MCF 10A (cell line): ENCODE measurements at regions of chr18 and their contacts with region 1.

Region 1: GRCh38 chr18:57941841-57942489 is 102.1 kb upstream of the NEDD4L start:
- DNase-seq: peak; percentile 91
- H3K4me3 Mint-ChIP-seq: no peak overlapping the region
- H3K27ac Mint-ChIP-seq: no peak overlapping the region
- H3K4me1 Mint-ChIP-seq: peaks cover 23% of the 10 kb centered on the region
- H3K27me3 Mint-ChIP-seq: no peaks in the 10 kb centered on the region
- CTCF ChIP-seq: no peak

Region 2: GRCh38 chr18:57898506-57899124 is 43.4 kb before region 1 on chr18:
- CTCF ChIA-PET with region 1: no interaction called
- POLR2A ChIA-PET with region 1: interaction called, 19 read pairs
- intact Hi-C with region 1: no loop called
- DNase-seq: peak; percentile 73
- H3K4me3 Mint-ChIP-seq: no peak overlapping the region
- H3K27ac Mint-ChIP-seq: no peak overlapping the region
- H3K4me1 Mint-ChIP-seq: peaks cover 27% of the 10 kb centered on the region
- H3K27me3 Mint-ChIP-seq: no peaks in the 10 kb centered on the region
- CTCF ChIP-seq: no peak

Region 3: GRCh38 chr18:57910817-57911216 is 31.1 kb before region 1 on chr18:
- CTCF ChIA-PET with region 1: interaction called, 4 read pairs
- POLR2A ChIA-PET with region 1: interaction called, 11 read pairs
- intact Hi-C with region 1: no loop called
- DNase-seq: no peak
- H3K4me3 Mint-ChIP-seq: no peak overlapping the region
- H3K27ac Mint-ChIP-seq: peak overlapping the region; percentile 97
- H3K4me1 Mint-ChIP-seq: peaks cover 39% of the 10 kb centered on the region
- H3K27me3 Mint-ChIP-seq: no peaks in the 10 kb centered on the region
- CTCF ChIP-seq: peak; percentile 39

Region 4: DNA sequence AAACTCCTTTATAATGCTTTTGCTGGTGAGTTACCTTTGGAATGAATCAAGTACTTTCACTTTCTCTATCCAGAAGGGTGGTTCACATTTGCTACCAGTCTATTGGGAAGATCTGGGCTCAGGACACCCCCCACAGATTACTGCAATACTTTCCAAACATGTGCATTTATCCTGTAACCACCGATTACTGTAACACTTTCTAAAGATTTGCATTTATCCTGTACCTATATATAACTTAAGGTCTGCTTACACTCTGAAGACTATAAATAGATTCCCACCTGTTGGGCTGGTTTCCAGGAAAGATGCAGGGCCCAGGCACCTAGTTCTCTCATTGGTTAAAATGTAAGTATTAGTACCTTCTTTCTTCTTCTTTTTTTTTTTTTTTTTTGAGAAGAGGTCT is 10.9 kb before region 1 on chr18:
- CTCF ChIA-PET with region 1: interaction called, 3 read pairs
- POLR2A ChIA-PET with region 1: interaction called, 13 read pairs
- intact Hi-C with region 1: no loop called
- DNase-seq: peak; percentile 36
- H3K4me3 Mint-ChIP-seq: no peak overlapping the region
- H3K27ac Mint-ChIP-seq: no peak overlapping the region
- H3K4me1 Mint-ChIP-seq: peaks cover 14% of the 10 kb centered on the region
- H3K27me3 Mint-ChIP-seq: no peaks in the 10 kb centered on the region
- CTCF ChIP-seq: no peak

Region 5: GRCh38 chr18:58314284-58314683 is 372.3 kb after region 1 on chr18:
- CTCF ChIA-PET with region 1: no interaction called
- POLR2A ChIA-PET with region 1: no interaction called
- intact Hi-C with region 1: no loop called
- DNase-seq: peak; percentile 95
- H3K4me3 Mint-ChIP-seq: no peak overlapping the region
- H3K27ac Mint-ChIP-seq: peak overlapping the region; percentile 83
- H3K4me1 Mint-ChIP-seq: peaks cover 49% of the 10 kb centered on the region
- H3K27me3 Mint-ChIP-seq: no peaks in the 10 kb centered on the region
- CTCF ChIP-seq: no peak